A673 (cell line): ENCODE measurements at regions of chr5 and their contacts with region 1.

Region 1: DNA sequence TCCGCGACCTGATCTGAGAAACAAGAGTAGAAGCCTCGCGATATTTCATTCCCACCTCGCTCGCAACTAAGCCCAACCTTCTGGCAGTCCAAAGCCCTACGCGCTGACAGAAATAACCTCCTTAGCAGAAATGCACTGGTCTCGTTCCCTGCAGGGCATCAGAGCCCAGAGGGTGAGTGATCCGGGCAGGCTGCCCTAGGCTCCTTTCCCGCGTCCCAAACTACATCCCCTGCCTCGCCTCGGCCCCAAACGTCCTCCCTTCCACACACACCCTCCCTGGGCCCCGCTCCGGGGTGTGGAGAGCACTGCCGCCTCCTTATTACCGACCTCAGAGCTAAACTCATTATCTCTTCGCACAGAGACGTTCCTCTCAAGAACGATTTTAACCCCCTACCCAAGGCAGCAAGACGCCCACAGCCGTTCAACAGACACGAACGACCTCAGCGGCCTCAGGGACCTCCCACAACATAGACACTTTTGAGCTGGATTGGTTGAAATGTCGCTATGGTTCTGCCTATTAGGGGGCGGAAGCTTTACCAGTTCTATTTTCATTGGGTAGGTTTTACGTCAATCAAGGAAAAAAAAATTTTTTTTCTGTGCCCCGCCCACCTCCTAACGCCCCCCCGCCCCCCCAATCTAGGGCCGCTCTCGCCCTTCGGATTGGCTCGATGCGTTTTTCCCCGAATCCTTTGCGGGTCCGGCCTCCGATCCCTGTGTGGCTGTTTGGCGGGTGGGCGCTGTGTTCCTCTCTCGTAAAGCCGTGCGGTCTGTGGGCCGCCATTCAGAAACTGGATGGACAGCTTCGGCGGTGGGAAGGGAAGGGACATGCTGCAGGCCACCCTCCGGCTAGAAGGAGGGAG is at the start of gene CETN3:
- DNase-seq: peak; percentile 96
- H3K4me3 ChIP-seq: peak within 1 kb of the TSS; percentile 96
- H3K27ac ChIP-seq: peak within 1 kb of the TSS; percentile 97
- H3K4me1 ChIP-seq: peaks cover 19% of the 10 kb centered on the region
- H3K27me3 ChIP-seq: no peaks in the 10 kb centered on the region
- CTCF ChIP-seq: no peak
- total RNA-seq, gene CETN3: 25.3 and 30.1 TPM in 2 replicates

Region 2: DNA sequence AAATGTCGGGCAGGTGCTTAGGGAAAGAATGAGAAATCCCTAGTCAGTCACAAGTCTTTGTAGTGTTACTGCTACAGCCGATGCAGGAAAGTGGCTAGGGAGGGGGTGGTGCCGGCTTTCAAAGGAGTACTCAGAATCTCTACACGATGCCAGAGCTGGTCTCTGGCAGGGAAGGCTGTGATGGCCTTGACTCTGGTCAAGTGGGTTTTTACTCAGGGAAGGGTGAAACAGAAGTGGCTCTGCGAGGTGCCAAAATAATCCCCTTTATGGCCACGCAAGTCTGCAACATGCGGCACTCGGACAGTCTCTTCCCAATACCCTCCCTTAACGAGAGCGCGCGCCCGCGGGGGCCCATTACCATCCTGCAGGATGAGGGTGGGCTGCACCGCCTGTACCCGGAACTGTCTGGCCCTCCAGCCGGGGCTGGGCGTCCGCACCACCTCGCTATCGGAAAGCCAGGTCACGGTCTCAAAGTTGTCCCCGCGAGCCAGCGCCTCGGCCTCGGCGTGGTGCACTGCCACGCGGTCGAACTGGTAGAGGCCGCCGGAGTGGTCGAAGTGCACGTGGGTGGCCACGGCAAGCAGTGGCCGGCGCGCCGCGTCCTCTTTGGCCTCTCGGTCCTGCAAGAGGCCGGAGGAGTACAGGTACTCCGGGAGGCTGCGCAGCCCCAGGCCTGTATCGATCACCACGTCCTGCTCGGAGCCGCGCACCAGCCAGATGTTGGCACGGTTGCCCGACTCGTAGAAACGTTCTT is 64.1 kb after region 1 on chr5:
- CTCF ChIA-PET with region 1: no interaction called
- POLR2A ChIA-PET with region 1: no interaction called
- intact Hi-C with region 1: loop called (anchors 1 kb)
- DNase-seq: peak; percentile 21
- H3K4me3 ChIP-seq: peak overlapping the region; percentile 67
- H3K27ac ChIP-seq: peak overlapping the region; percentile 74
- H3K4me1 ChIP-seq: peaks cover 26% of the 10 kb centered on the region
- H3K27me3 ChIP-seq: no peaks in the 10 kb centered on the region
- CTCF ChIP-seq: no peak

Region 3: DNA sequence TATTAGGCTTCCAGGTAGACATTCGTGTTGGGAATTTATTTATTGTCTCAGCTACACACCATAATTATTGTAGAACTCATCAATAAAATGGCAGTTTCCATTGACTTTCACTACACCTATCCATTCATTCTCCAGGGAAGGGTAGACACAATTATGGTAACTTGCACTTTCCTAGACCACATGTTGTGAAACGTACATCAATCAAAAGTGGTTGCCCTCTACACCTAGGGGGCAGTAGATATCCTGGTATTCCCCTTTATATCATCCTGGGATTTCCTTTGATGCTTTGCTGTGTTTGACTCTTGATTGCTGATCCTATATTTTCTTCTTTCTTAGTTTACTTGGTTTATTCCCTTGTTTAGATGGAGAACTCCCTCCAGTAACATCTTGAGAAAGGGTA is 197.0 kb after region 1 on chr5:
- CTCF ChIA-PET with region 1: no interaction called
- POLR2A ChIA-PET with region 1: no interaction called
- intact Hi-C with region 1: no loop called
- DNase-seq: peak; percentile 40
- H3K4me3 ChIP-seq: no peak overlapping the region
- H3K27ac ChIP-seq: no peak overlapping the region
- H3K4me1 ChIP-seq: no peaks in the 10 kb centered on the region
- H3K27me3 ChIP-seq: peaks cover 9% of the 10 kb centered on the region
- CTCF ChIP-seq: peak; percentile 57